ENCODE measurements at regions of chr2 and their contacts with region 1.

Region 1: DNA sequence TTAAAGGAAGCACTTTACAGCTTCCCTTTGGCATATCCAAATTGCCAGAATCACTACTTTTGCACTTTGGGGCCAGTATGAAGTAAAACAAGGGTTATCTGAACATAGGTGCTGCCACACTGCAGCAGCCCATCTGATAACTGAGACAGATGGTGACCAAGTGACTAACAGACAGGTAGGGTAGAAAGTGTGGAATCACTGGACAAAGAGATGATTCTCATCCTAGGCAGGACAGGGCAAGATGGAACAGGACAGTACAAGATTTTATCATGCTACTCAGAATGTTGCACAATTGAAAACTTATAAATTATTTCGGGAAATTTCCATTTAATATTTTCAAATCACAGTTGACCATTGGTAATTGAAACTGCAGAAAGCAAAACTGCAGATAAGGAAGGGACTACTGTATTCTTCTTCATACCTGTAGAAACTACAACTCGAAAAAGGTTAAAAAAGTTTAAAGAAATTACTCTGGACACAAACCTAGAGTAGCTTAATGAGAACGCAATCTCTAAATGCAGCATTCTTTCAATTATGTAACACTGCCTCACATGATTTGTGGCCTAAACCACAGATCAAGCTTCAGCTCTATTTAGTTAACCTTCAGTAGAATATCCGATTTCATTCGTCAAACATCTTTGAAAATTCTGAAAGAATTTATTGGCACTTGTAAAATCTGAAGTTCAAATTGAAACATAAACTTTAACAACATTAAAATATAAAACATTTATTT is 31.4 kb downstream of the HEATR5B start:
- DNase-seq: no peak
- ATAC-seq: no peak
- H3K4me3 ChIP-seq: no peak overlapping the region
- H3K4me3 Mint-ChIP-seq: no peak overlapping the region
- H3K27ac ChIP-seq: no peak overlapping the region
- H3K27ac Mint-ChIP-seq: no peak overlapping the region
- H3K4me1 ChIP-seq: no peaks in the 10 kb centered on the region
- H3K4me1 Mint-ChIP-seq: no peaks in the 10 kb centered on the region
- H3K27me3 ChIP-seq: no peaks in the 10 kb centered on the region
- H3K27me3 Mint-ChIP-seq: no peaks in the 10 kb centered on the region

Region 2: DNA sequence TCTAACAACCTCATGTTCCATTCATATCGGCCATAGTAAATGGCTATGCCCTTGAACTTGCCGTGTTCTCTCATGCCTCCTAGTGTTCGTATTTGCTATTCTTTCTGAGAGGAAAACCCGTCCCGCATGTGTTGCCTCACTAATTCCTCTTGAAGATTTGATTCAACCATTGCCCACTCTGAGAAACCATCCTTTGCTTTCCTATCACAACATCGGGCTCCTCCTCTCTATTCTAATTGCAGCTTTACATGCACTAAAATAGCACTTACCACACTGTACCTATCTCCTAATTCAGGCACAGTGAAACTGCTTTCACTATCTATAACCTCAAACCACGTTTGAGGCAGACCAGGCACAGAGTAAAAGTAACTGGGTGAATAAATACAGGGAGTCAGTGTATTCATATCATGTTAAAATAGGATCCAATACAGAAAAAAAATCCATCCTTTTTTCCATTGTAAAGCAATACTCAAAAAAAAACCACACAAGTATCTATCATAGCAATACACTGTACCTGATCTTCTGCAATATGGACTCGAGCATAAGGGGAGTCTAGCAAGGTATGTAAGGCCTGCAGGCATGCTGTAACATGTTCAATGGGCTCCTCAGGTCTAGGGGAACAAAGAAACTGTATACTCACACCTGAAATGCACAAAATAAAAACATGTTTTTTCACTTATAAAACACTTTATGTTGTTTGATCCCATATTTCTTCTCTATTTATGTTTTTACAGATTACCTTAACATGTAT is 47.5 kb before region 1 on chr2:
- CTCF ChIA-PET with region 1: interaction called in 1 of 2 experiments, 10 read pairs
- POLR2A ChIA-PET with region 1: no interaction called
- DNase-seq: peak in 7 of 35 experiments; percentile 1 to 37 (median 11)
- ATAC-seq: peak; percentile 37 to 76 (median 54)
- H3K4me3 ChIP-seq: no peak overlapping the region
- H3K4me3 Mint-ChIP-seq: peak overlapping the region in 1 of 3 donors; percentile 3
- H3K27ac ChIP-seq: no peak overlapping the region
- H3K27ac Mint-ChIP-seq: peak overlapping the region; percentile 58 to 62
- H3K4me1 ChIP-seq: no peaks in the 10 kb centered on the region
- H3K4me1 Mint-ChIP-seq: peaks cover 8 to 12% (median 10%) of the 10 kb centered on the region in 3 donors
- H3K27me3 ChIP-seq: no peaks in the 10 kb centered on the region
- H3K27me3 Mint-ChIP-seq: no peaks in the 10 kb centered on the region

Region 3: DNA sequence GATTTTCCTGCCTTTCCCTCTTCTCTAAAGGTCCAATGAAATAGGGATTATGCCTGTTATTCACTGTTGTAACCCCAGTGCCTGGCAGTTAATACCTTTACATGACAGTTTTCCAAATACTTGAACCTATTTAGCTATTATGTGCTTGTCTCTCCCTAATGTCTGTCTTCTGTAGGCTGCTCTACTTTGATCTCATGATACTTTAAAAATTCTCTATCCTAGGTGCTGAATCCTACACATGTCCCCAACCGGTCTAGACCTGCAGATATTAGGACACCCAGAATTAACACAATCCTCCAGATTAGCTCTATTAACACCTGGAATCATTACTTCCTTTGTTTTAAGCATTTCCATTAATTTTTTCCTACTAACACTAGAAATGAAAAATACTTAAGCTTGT is 171.3 kb after region 1 on chr2:
- CTCF ChIA-PET with region 1: no interaction called
- POLR2A ChIA-PET with region 1: no interaction called
- DNase-seq: no peak
- ATAC-seq: no peak
- H3K4me3 ChIP-seq: no peak overlapping the region
- H3K4me3 Mint-ChIP-seq: no peak overlapping the region
- H3K27ac ChIP-seq: no peak overlapping the region
- H3K27ac Mint-ChIP-seq: no peak overlapping the region
- H3K4me1 ChIP-seq: peaks cover 0 to 2% of the 10 kb centered on the region in 2 experiments
- H3K4me1 Mint-ChIP-seq: peaks cover 56 to 63% (median 61%) of the 10 kb centered on the region in 3 donors
- H3K27me3 ChIP-seq: no peaks in the 10 kb centered on the region
- H3K27me3 Mint-ChIP-seq: no peaks in the 10 kb centered on the region